Mammary epithelial cell (primary cell): ENCODE measurements at regions of chr6 and their contacts with region 1.

Region 1: GRCh38 chr6:56168596-56168995 is 78.8 kb downstream of the COL21A1 start:
- DNase-seq: peak; percentile 68
- H3K4me3 ChIP-seq: no peak overlapping the region
- H3K27ac ChIP-seq: no peak overlapping the region
- H3K4me1 ChIP-seq: peaks cover 4% of the 10 kb centered on the region
- H3K27me3 ChIP-seq: no peaks in the 10 kb centered on the region
- CTCF ChIP-seq: no peak

Region 2: GRCh38 chr6:56055081-56055704 is 113.4 kb before region 1 on chr6:
- CTCF ChIA-PET with region 1: no interaction called
- dilution Hi-C with region 1: no loop called
- in situ Hi-C with region 1: no loop called
- intact Hi-C with region 1: loop called (anchors 5 kb)
- DNase-seq: no peak
- H3K4me3 ChIP-seq: no peak overlapping the region
- H3K27ac ChIP-seq: no peak overlapping the region
- H3K4me1 ChIP-seq: no peaks in the 10 kb centered on the region
- H3K27me3 ChIP-seq: no peaks in the 10 kb centered on the region
- CTCF ChIP-seq: no peak